HEK293 (cell line): ENCODE measurements at regions of chr12 and their contacts with region 1.

Region 1: GRCh38 chr12:1661553-1662335 is 29.1 kb upstream of the ADIPOR2 start:
- H3K4me3 ChIP-seq: peak overlapping the region; percentile 45
- H3K27ac ChIP-seq: peak overlapping the region; percentile 37; the same call in 1 of the 2 replicates
- H3K4me1 ChIP-seq: no peaks in the 10 kb centered on the region
- CTCF ChIP-seq: no peak

Region 2: DNA sequence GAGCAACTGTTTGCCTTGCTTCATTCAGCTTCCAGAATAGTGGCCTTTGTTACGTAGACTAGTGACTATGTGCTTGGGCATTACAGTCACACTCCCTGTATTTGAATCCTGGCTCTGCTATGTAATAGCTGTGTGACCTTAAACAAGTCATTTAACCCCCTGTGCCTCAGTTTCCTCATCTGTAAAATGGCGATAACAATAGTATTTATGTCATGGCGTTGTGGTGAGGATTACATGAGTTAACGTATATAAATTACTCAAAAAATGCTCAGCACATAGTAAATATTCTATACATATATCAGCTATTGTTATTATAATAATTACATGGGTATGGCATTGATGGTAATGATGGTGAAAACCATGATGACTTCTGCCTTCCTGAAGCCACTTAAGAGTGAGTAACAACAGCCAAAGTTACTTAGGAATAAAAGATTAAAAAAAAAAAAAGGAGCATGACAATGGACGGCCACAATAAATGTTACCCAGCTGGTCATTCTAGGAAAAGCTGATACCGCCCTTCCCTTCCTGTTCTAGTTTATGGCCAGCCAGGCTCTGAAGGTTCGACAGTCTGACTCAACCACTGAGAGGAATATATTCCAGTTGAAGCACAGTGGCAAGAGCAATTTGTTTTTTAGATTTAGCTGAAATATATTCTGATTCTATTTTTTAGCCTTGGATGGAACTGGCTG is 19.2 kb after region 1 on chr12:
- CTCF ChIA-PET with region 1: no interaction called
- POLR2A ChIA-PET with region 1: interaction called, 11 read pairs
- H3K4me3 ChIP-seq: no peak overlapping the region
- H3K27ac ChIP-seq: no peak overlapping the region
- H3K4me1 ChIP-seq: no peaks in the 10 kb centered on the region
- CTCF ChIP-seq: no peak

Region 3: DNA sequence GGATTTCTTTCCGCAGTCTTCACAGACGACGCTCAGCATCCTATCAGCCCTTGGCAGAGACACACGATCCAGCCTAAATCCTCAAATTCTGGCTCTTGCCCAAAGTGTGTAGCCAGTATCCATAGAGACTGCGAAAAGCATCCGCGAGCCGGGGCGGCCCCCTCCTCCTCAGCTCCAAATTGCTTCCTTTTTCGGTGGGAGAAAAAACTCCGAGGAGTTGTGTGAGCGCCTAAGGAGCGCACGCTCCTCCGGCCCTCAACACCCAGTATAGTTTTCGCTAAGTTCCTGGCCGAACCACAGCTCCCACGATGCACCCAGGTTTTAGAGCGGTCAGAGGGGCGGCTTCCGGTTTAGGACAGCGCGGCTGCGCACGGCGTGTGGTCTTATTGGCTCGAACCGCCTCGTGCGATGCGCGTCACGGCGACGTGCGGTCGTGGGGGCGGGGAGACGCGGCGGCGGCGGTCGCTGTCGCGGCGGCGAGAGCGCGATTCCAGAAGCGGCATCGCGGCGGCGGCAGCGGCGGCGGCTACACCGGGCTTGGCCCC is 28.9 kb after region 1 on chr12 and contains the start of gene ADIPOR2:
- CTCF ChIA-PET with region 1: interaction called, 4 read pairs
- POLR2A ChIA-PET with region 1: interaction called, 20 read pairs
- H3K4me3 ChIP-seq: peak within 1 kb of the TSS; percentile 71
- H3K27ac ChIP-seq: peak within 1 kb of the TSS; percentile 94
- H3K4me1 ChIP-seq: peaks cover 11% of the 10 kb centered on the region
- CTCF ChIP-seq: no peak